CD8-positive, alpha-beta T cell (primary cell): ENCODE measurements at regions of chr1 and their contacts with region 1.

Region 1: DNA sequence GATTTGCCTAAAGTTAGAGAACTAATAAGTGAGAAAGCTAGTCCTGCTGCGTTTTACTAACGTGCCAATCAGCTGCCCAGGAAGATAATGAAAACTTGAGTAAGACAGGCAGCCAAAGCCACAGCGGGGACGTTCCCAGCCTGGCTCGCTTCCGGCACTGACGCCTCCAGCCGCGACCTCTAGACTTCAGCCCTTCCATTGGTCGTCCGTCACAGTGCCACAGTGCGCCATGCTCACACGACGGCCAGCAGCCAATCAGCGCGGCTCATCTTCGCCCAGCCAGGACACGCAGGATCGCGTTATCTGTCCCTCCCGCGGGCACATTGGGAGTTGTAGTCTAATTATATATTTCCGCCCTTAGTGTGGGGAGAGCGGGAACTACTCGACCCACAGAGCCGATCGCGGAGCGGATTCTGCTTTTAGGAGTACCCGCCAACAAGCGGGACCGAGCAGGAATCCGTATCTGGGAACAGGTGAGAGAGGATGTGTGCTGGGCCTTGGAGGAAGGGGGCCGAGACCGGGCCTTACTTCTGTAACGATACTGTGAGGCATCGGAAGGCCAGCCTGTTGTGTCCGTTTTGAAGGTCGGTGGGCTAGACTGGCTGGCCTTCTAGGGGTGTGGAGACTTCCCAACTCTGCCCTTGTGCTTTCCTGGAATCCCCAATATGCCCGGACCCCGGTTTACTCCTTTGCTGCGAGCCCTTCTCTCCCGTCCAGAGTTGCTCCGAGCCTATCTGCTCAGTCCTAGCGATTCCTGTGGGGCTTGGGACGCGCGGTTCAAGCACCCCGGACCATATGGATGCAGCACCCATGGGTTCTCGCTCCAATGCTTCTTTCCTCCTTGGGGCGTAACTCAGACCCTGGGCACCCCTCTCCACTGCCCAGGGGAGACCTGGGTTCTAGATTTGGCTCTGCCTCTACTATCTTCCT is at the start of gene FDPS:
- DNase-seq: peak; percentile 92 to 100 (median 96)
- ATAC-seq: peak; percentile 97
- H3K4me3 ChIP-seq: peak within 1 kb of the TSS; percentile 73 to 97
- H3K4me3 Mint-ChIP-seq: peak within 1 kb of the TSS; percentile 94
- H3K27ac ChIP-seq: peak within 1 kb of the TSS; percentile 70 to 91
- H3K27ac Mint-ChIP-seq: peak within 1 kb of the TSS; percentile 93
- H3K4me1 ChIP-seq: peaks cover 18% of the 10 kb centered on the region
- H3K4me1 Mint-ChIP-seq: peaks cover 27% of the 10 kb centered on the region
- H3K27me3 ChIP-seq: no peaks in the 10 kb centered on the region
- H3K27me3 Mint-ChIP-seq: no peaks in the 10 kb centered on the region
- CTCF ChIP-seq: no peak
- total RNA-seq, gene FDPS: 38.2 to 38.7 TPM

Region 2: GRCh38 chr1:155261852-155262673 is 46.7 kb before region 1 on chr1 and contains the start of gene SCAMP3:
- CTCF ChIA-PET with region 1: interaction called, 3 read pairs
- POLR2A ChIA-PET with region 1: interaction called, 6 read pairs
- intact Hi-C with region 1: loop called (anchors 1 kb)
- DNase-seq: peak; percentile 61 to 96 (median 84)
- ATAC-seq: peak; percentile 95
- H3K4me3 ChIP-seq: peak within 1 kb of the TSS; percentile 79 to 86
- H3K4me3 Mint-ChIP-seq: peak within 1 kb of the TSS; percentile 100
- H3K27ac ChIP-seq: peak within 1 kb of the TSS; percentile 72 to 85
- H3K27ac Mint-ChIP-seq: peak within 1 kb of the TSS; percentile 97
- H3K4me1 ChIP-seq: peaks cover 16% of the 10 kb centered on the region
- H3K4me1 Mint-ChIP-seq: peaks cover 29% of the 10 kb centered on the region
- H3K27me3 ChIP-seq: no peaks in the 10 kb centered on the region
- H3K27me3 Mint-ChIP-seq: no peaks in the 10 kb centered on the region
- CTCF ChIP-seq: no peak
- total RNA-seq, gene SCAMP3: 47.5 to 48.5 TPM

Region 3: GRCh38 chr1:155323798-155324610 is 15.2 kb after region 1 on chr1:
- CTCF ChIA-PET with region 1: interaction called, 9 read pairs
- POLR2A ChIA-PET with region 1: interaction called, 11 read pairs
- intact Hi-C with region 1: loop called (anchors 1 kb)
- DNase-seq: peak; percentile 66 to 94 (median 85)
- ATAC-seq: peak; percentile 81
- H3K4me3 ChIP-seq: peak overlapping the region; percentile 89 to 100
- H3K4me3 Mint-ChIP-seq: peak overlapping the region; percentile 90
- H3K27ac ChIP-seq: peak overlapping the region; percentile 69 to 90
- H3K27ac Mint-ChIP-seq: peak overlapping the region; percentile 55
- H3K4me1 ChIP-seq: peaks cover 34% of the 10 kb centered on the region
- H3K4me1 Mint-ChIP-seq: peaks cover 33% of the 10 kb centered on the region
- H3K27me3 ChIP-seq: no peaks in the 10 kb centered on the region
- H3K27me3 Mint-ChIP-seq: no peaks in the 10 kb centered on the region
- CTCF ChIP-seq: no peak

Region 4: DNA sequence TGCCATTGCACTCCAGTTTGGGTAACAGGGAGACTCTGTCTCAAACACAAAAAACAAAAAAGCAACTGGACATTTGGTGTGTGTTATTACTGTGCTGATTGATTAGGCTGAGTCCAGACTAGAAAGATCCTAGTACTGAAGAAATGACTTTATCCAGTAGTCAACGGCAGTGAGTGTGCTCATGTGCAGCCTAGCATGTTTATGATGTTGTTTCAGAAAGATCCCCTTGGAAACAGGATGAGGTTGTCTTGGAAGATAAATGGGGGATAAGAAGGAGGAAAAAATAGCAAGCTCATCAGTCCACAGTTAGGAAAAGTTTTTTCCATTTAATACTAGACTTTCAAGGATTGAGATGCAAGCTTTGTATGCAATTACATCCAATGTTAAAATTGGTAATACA is 26.2 kb after region 1 on chr1:
- CTCF ChIA-PET with region 1: no interaction called
- POLR2A ChIA-PET with region 1: no interaction called
- intact Hi-C with region 1: no loop called
- DNase-seq: no peak
- ATAC-seq: no peak
- H3K4me3 ChIP-seq: no peak overlapping the region
- H3K4me3 Mint-ChIP-seq: no peak overlapping the region
- H3K27ac ChIP-seq: no peak overlapping the region
- H3K27ac Mint-ChIP-seq: no peak overlapping the region
- H3K4me1 ChIP-seq: no peaks in the 10 kb centered on the region
- H3K4me1 Mint-ChIP-seq: no peaks in the 10 kb centered on the region
- H3K27me3 ChIP-seq: no peaks in the 10 kb centered on the region
- H3K27me3 Mint-ChIP-seq: no peaks in the 10 kb centered on the region
- CTCF ChIP-seq: no peak